GM18951 (cell line): ENCODE measurements at regions of chrX and their contacts with region 1.

Region 1: DNA sequence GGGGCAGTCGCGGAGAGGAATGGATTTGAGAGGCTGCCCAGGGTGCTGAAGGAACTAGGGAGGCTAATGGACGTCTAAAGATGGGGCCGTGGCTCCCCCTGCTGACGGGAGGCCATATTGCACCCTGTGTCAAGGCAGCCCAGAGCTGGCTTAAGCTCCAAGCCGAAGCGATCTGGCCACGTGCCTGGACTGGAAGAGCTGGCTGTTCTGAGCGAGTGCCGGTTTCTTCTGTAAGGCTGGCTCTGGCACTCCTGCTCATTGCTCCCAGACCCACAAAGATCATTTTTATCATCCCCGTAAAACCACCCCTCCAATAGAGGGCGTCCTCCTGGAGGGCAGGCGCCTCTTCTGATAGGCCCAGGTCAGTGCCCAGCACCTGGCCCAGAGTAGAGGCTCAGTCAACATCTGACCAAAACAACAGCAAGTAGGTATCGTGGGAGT is 5.6 kb downstream of the PNCK start:
- POLR2A ChIP-seq: no peak

Region 2: GRCh38 chrX:153554519-153555167 is 113.3 kb before region 1 on chrX:
- in situ Hi-C with region 1: loop called (anchors 10 kb)
- POLR2A ChIP-seq: no peak